Naive thymus-derived CD4-positive, alpha-beta T cell (primary cell): ENCODE measurements at regions of chrX and their contacts with region 1.

Region 1: DNA sequence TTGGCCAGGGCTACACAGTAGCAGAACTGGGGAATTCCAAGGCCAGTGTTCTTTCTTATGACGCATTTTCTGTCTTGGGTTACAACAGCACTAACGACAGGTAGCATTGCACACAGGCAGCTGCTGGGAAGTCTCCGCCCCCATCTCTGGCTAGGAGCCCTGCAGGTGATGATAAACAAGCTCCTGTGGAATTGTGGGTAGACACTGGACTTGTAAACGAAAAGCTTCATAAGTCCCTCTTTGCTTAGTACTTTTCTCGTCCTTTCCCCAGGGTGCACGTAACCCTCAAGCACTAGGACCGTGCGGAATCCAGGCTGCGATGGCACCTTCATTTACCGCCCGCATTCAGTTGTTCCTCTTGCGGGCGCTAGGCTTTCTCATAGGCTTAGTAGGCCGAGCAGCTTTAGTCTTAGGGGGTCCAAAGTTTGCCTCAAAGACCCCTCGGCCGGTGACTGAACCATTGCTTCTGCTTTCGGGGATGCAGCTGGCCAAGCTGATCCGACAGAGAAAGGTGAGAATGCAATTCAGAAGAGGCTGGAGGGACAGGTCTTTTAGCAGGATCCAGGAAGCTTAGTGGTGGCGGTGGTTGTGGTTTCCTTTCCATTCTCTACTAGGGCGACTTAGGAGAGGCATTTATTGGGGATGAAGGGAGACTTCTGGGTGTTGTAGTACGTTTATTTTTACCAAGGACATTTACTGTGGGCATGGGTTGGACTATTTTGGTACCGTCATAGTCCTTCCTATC is at the start of gene FAAH2:
- DNase-seq: peak; percentile 7 to 88 (median 66)
- ATAC-seq: peak; percentile 91
- H3K4me3 ChIP-seq: peak within 1 kb of the TSS; percentile 82
- H3K4me3 Mint-ChIP-seq: peak within 1 kb of the TSS; percentile 82 to 95 (median 92)
- H3K27ac ChIP-seq: peak within 1 kb of the TSS; percentile 88
- H3K27ac Mint-ChIP-seq: peak within 1 kb of the TSS; percentile 57 to 96 (median 95)
- H3K4me1 ChIP-seq: peaks cover 0 to 3% of the 10 kb centered on the region in 2 donors
- H3K4me1 Mint-ChIP-seq: peaks cover 5 to 57% (median 43%) of the 10 kb centered on the region in 7 donors
- H3K27me3 ChIP-seq: no peaks in the 10 kb centered on the region
- H3K27me3 Mint-ChIP-seq: no peaks in the 10 kb centered on the region
- total RNA-seq, gene FAAH2: 7.5 to 12.6 (median 9.7) TPM

Region 2: DNA sequence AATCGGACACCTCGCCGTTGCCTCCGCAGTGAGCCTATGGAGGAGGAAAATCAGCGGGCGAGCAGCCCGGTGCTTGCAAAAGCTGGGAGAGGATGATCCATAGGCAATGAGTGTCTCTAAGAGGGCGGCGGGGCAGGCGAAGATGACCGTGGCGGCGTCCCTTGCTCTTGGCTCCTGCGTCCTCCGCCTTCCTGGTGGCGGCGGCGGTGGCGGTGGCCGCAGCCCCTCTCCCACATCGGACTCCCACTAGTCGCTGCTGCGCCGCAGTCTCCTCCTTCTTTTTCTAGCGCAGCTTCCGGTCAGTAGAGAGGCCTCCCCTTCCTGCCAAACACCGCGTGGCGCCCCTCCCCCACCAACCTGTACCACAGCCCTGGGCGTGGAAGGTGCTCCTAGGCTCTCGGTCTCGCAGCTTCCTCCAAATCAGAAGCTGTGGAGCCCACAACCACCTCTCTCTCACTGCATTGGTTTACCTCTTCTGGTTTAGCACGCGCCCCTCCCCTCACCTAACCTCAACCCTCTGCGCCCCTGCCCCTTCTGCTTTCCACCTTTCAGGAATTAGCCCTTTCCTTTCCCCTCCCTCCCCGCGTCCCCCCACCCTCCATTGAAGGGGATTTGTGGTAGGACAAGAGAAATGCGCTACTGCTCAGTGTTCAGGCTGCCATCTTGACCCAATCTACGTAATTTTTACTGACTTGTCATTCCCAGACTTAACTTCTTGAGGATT is 291.2 kb before region 1 on chrX and contains the start of gene SPIN3:
- CTCF ChIA-PET with region 1: no interaction called
- POLR2A ChIA-PET with region 1: no interaction called
- intact Hi-C with region 1: loop called in 1 of 2 experiments (anchors 10 kb)
- DNase-seq: peak; percentile 15 to 67 (median 48)
- ATAC-seq: peak; percentile 81
- H3K4me3 ChIP-seq: peak within 1 kb of the TSS; percentile 50
- H3K4me3 Mint-ChIP-seq: peak within 1 kb of the TSS; percentile 91 to 98 (median 95)
- H3K27ac ChIP-seq: peak within 1 kb of the TSS; percentile 42
- H3K27ac Mint-ChIP-seq: peak within 1 kb of the TSS; percentile 90 to 97 (median 93)
- H3K4me1 ChIP-seq: peaks cover 0 to 4% of the 10 kb centered on the region in 2 donors
- H3K4me1 Mint-ChIP-seq: peaks cover 11 to 58% (median 38%) of the 10 kb centered on the region in 7 donors
- H3K27me3 ChIP-seq: no peaks in the 10 kb centered on the region
- H3K27me3 Mint-ChIP-seq: no peaks in the 10 kb centered on the region
- total RNA-seq, gene SPIN3: 8.8 to 24.2 (median 13.5) TPM

Region 3: GRCh38 chrX:57380026-57380796 is 93.5 kb after region 1 on chrX:
- CTCF ChIA-PET with region 1: no interaction called
- POLR2A ChIA-PET with region 1: no interaction called
- intact Hi-C with region 1: no loop called
- DNase-seq: no peak
- ATAC-seq: no peak
- H3K4me3 ChIP-seq: no peak overlapping the region
- H3K4me3 Mint-ChIP-seq: no peak overlapping the region
- H3K27ac ChIP-seq: no peak overlapping the region
- H3K27ac Mint-ChIP-seq: no peak overlapping the region
- H3K4me1 ChIP-seq: no peaks in the 10 kb centered on the region
- H3K4me1 Mint-ChIP-seq: peaks cover 0 to 6% (median 0%) of the 10 kb centered on the region in 7 donors
- H3K27me3 ChIP-seq: no peaks in the 10 kb centered on the region
- H3K27me3 Mint-ChIP-seq: no peaks in the 10 kb centered on the region

Region 4: GRCh38 chrX:57453901-57454300 is 167.2 kb after region 1 on chrX:
- CTCF ChIA-PET with region 1: interaction called, 3 read pairs
- POLR2A ChIA-PET with region 1: no interaction called
- intact Hi-C with region 1: loop called (anchors 1 kb)
- DNase-seq: peak in 7 of 9 donors; percentile 0 to 35 (median 14)
- ATAC-seq: no peak
- H3K4me3 ChIP-seq: no peak overlapping the region
- H3K4me3 Mint-ChIP-seq: no peak overlapping the region
- H3K27ac ChIP-seq: no peak overlapping the region
- H3K27ac Mint-ChIP-seq: peak overlapping the region in 1 of 9 donors; percentile 62
- H3K4me1 ChIP-seq: no peaks in the 10 kb centered on the region
- H3K4me1 Mint-ChIP-seq: peaks cover 0 to 3% (median 0%) of the 10 kb centered on the region in 7 donors
- H3K27me3 ChIP-seq: no peaks in the 10 kb centered on the region
- H3K27me3 Mint-ChIP-seq: no peaks in the 10 kb centered on the region

Region 5: GRCh38 chrX:57595381-57595811 is 308.7 kb after region 1 on chrX:
- CTCF ChIA-PET with region 1: no interaction called
- POLR2A ChIA-PET with region 1: interaction called, 3 read pairs
- intact Hi-C with region 1: loop called (anchors 5 kb)
- DNase-seq: no peak
- ATAC-seq: no peak
- H3K4me3 ChIP-seq: no peak overlapping the region
- H3K4me3 Mint-ChIP-seq: peak overlapping the region; percentile 6 to 87 (median 68)
- H3K27ac ChIP-seq: no peak overlapping the region
- H3K27ac Mint-ChIP-seq: peak overlapping the region in 5 of 9 donors; percentile 0 to 79 (median 50)
- H3K4me1 ChIP-seq: peaks cover 0 to 18% of the 10 kb centered on the region in 2 donors
- H3K4me1 Mint-ChIP-seq: peaks cover 8 to 54% (median 39%) of the 10 kb centered on the region in 7 donors
- H3K27me3 ChIP-seq: no peaks in the 10 kb centered on the region
- H3K27me3 Mint-ChIP-seq: no peaks in the 10 kb centered on the region

Region 6: DNA sequence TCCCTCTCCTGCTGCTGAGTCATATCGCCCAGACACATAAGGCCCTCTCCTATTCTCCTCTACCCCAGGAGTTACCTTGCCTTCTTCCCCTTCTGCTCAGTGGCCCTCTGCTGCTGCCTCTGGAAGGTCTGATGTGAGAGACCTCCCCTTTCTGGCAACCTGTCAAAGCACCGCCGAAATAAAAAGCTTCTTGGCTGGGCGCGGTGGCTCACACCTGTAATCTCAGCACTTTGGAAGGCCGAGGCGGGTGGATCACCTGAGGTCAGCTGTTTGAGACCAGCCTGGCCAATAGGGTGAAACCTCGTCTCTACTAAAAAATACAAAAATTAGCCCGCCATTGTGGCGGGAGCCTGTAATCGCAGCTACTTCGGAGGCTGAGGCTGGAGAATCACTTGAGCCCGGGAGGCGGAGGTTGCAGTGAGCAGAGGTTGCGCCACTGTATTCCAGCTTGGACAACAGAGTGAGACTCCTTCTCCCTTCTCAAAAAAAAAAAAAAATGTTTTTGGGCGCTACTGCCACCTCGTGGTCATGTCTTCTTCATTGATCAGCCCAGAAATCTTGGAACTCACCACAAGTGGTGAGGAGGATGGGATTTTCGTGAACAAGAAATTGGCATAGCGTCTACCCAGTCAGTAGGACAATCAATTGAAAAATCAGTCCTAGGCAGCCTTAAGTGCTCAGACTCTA is 632.2 kb after region 1 on chrX:
- CTCF ChIA-PET with region 1: no interaction called
- POLR2A ChIA-PET with region 1: no interaction called
- intact Hi-C with region 1: loop called in 1 of 2 experiments (anchors 5 kb)
- DNase-seq: peak in 6 of 9 donors; percentile 13 to 37 (median 29)
- ATAC-seq: peak; percentile 54
- H3K4me3 ChIP-seq: no peak overlapping the region
- H3K4me3 Mint-ChIP-seq: no peak overlapping the region
- H3K27ac ChIP-seq: no peak overlapping the region
- H3K27ac Mint-ChIP-seq: peak overlapping the region in 1 of 9 donors; percentile 25
- H3K4me1 ChIP-seq: no peaks in the 10 kb centered on the region
- H3K4me1 Mint-ChIP-seq: no peaks in the 10 kb centered on the region
- H3K27me3 ChIP-seq: no peaks in the 10 kb centered on the region
- H3K27me3 Mint-ChIP-seq: no peaks in the 10 kb centered on the region